Dendritic cell treated with granulocyte-macrophage colony-stimulating factor and Interleukin-4, amounts not matched to agents 40 ng/mL and 50 ng/mL, for 4 days (primary cell): ENCODE measurements at regions of chr15 and their contacts with region 1.

Region 1: GRCh38 chr15:69413822-69414700 is at the start of gene KIF23:
- H3K4me3 Mint-ChIP-seq: peak within 1 kb of the TSS; percentile 85
- H3K27ac Mint-ChIP-seq: peak within 1 kb of the TSS; percentile 64
- H3K4me1 Mint-ChIP-seq: peaks cover 7% of the 10 kb centered on the region
- H3K27me3 Mint-ChIP-seq: no peaks in the 10 kb centered on the region

Region 2: DNA sequence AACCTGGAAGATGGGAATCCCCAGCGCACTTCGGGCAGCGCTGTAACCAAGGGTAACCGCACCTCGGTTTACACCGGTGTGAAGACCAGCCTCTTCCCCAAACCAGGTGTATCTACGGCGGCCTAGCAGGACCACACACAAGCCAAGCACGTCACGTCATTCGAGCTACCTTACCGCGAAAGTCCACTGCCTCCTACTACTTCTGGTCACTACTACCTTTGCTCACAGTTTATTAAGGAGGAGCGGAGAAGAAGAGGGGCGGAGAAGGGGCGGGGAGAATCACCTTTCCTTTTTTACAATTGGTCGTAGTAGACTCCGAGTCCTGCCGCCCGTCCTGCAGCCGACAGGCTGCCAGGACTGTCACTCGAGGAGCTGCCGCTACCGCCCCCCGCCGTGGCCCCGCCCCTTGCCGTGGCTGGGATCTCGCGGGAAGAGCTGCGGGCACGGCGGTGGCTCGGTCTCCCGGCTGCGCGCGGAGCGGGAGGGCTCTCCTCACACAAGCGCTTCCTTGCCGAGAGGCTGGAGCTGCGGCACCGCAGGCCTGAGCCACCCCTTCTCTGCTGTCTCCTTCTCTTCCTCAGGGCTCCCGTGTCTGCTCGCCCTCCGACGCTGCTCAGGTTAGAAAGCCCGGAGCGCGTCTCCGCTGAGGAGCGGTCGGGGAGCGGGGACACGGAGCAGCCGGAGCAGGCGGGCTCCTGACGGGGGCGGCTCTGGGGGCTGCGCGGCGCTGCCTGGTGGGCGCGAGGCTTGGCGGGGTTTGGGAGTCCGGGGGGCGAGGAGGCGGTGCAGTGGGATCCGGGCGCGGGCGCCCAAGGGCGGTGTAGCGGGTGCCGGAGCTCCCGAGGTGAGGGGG is 253.7 kb before region 1 on chr15 and contains the start of gene GLCE:
- intact Hi-C with region 1: loop called (anchors 10 kb)
- H3K4me3 Mint-ChIP-seq: peak within 1 kb of the TSS; percentile 93
- H3K27ac Mint-ChIP-seq: peak within 1 kb of the TSS; percentile 86
- H3K4me1 Mint-ChIP-seq: peaks cover 24% of the 10 kb centered on the region
- H3K27me3 Mint-ChIP-seq: peaks cover 7% of the 10 kb centered on the region

Region 3: DNA sequence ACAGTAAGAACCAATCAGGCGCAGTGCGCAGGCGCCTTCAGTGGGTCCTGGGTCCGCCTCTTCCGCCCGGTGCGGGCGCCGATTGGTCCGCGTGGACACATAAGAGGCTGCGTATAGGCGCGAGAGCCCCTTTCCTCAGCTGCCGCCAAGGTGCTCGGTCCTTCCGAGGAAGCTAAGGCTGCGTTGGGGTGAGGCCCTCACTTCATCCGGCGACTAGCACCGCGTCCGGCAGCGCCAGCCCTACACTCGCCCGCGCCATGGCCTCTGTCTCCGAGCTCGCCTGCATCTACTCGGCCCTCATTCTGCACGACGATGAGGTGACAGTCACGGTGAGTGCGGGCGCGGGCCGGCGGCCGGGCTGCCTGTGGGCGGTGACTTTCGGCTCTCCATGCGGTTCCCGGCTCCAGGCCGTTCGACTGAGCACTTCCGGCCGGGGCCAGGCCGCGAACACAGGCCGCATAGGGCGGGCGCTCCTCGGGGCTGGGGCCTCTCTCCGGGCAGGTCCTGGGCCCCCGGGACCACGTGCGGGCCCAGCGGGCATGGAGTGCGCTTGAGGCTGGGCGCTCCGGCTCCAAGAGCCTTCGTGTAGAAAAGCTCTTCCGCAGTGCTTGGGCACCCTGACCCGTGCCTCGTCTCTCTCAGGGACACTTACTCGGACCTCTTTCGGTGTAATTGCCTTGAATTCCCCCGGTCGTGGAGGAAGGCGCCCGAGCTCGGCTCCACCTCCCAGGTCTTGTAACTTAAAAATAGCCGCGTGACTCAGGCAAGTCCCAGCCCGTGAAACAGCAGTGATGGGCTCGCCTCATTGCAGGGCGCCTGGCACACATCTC is 38.8 kb after region 1 on chr15 and contains the start of gene RPLP1:
- intact Hi-C with region 1: loop called (anchors 1 kb)
- H3K4me3 Mint-ChIP-seq: peak within 1 kb of the TSS; percentile 96
- H3K27ac Mint-ChIP-seq: peak within 1 kb of the TSS; percentile 91
- H3K4me1 Mint-ChIP-seq: peaks cover 34% of the 10 kb centered on the region
- H3K27me3 Mint-ChIP-seq: no peaks in the 10 kb centered on the region

Region 4: DNA sequence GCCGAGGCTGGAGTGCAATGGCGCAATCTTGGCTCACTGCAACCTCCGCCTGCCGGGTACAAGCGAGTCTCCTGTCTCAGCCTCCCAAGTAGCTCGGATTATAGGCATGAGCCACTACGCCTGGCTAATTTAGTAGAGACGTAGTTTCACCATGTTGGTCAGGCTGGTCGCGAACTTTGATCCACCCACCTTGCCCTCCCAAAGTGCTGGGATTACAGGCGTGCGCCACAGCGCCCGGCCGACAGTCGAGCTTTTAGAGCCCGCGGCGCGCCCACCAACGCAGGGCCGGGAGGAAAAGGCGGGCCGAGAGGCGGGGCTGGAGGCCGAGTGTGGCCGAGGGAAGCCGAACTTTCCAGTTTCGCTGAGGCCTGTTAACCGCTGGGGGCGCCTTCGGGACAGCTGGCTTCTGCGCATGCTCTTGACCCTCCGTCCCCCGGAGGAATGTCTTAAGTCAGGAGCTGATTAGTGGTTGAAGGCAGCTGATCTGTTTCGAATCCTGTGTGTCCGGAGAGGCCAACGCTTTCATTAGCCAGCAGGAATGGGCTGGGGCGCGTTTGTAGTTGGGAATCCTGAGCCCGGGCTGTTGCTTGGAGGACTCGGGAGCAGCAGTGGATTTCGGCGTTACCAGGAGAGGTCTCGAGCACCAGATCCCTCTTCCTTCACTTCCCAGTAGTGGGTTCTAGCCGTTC is 48.6 kb after region 1 on chr15:
- intact Hi-C with region 1: loop called (anchors 2 kb)
- H3K4me3 Mint-ChIP-seq: peak overlapping the region; percentile 82
- H3K27ac Mint-ChIP-seq: peak overlapping the region; percentile 89
- H3K4me1 Mint-ChIP-seq: peaks cover 30% of the 10 kb centered on the region
- H3K27me3 Mint-ChIP-seq: no peaks in the 10 kb centered on the region